ENCODE measurements at regions of chr2 and their contacts with region 1.

Region 1: GRCh38 chr2:25878361-25879132 is at the start of gene ASXL2:
- DNase-seq: peak; percentile 98
- H3K4me3 ChIP-seq: peak within 1 kb of the TSS; percentile 61 to 93 (median 80)
- H3K27ac ChIP-seq: peak within 1 kb of the TSS; percentile 91 to 97 (median 92)
- H3K4me1 ChIP-seq: peaks cover 0 to 30% (median 19%) of the 10 kb centered on the region in 4 donors
- H3K27me3 ChIP-seq: no peaks in the 10 kb centered on the region
- CTCF ChIP-seq: peak in 1 of 4 experiments; percentile 8
- EP300 ChIP-seq: peak in 1 of 4 donors; percentile 7
- POLR2A ChIP-seq: peak; percentile 48 to 49
- total RNA-seq, gene ASXL2: 10.7 to 15.5 (median 14.4) TPM

Region 2: DNA sequence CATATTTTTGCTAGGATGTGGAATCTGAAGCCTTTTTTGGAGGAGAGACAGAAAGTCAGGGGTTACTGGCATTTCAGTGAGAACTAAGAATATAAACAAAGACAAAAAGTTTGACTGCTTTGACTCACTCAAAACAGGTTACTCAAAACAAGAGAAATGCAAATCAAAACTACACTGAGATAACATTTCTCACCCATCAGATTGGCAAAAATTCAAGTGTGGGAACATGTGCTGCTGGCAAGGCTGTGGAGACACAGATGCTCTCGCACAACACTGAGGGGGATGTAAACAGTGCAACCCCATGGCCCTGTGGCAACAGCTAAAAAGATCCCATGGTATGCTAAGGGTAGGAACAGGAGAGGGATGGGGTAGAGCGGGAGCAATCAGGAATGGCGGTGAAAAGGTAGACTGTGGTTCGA is 291.8 kb before region 1 on chr2:
- intact Hi-C with region 1: no loop called
- DNase-seq: no peak
- H3K4me3 ChIP-seq: no peak overlapping the region
- H3K27ac ChIP-seq: no peak overlapping the region
- H3K4me1 ChIP-seq: no peaks in the 10 kb centered on the region
- H3K27me3 ChIP-seq: no peaks in the 10 kb centered on the region
- CTCF ChIP-seq: no peak
- EP300 ChIP-seq: no peak
- POLR2A ChIP-seq: no peak

Region 3: GRCh38 chr2:25673300-25674076 is 205.1 kb before region 1 on chr2 and contains the start of gene DTNB:
- intact Hi-C with region 1: loop called (anchors 2 kb)
- DNase-seq: peak; percentile 92
- H3K4me3 ChIP-seq: peak within 1 kb of the TSS; percentile 62 to 94 (median 83)
- H3K27ac ChIP-seq: peak within 1 kb of the TSS; percentile 84 to 92 (median 90)
- H3K4me1 ChIP-seq: peaks cover 2 to 19% (median 12%) of the 10 kb centered on the region in 4 donors
- H3K27me3 ChIP-seq: no peaks in the 10 kb centered on the region
- CTCF ChIP-seq: no peak
- EP300 ChIP-seq: no peak
- POLR2A ChIP-seq: no peak
- total RNA-seq, gene DTNB: 4.8 to 7.8 (median 5.7) TPM

Region 4: GRCh38 chr2:25982273-25982967 is 103.9 kb after region 1 on chr2 and contains the start of gene KIF3C:
- intact Hi-C with region 1: loop called (anchors 5 kb)
- DNase-seq: peak; percentile 86
- H3K4me3 ChIP-seq: peak within 1 kb of the TSS; percentile 68 to 95 (median 78)
- H3K27ac ChIP-seq: peak within 1 kb of the TSS; percentile 68 to 82 (median 74)
- H3K4me1 ChIP-seq: peaks cover 0 to 54% (median 41%) of the 10 kb centered on the region in 4 donors
- H3K27me3 ChIP-seq: no peaks in the 10 kb centered on the region
- CTCF ChIP-seq: no peak
- EP300 ChIP-seq: no peak
- POLR2A ChIP-seq: no peak
- total RNA-seq, gene KIF3C: 5.7 to 12.5 (median 8.1) TPM